ENCODE measurements at regions of chr14 and their contacts with region 1.

Region 1: DNA sequence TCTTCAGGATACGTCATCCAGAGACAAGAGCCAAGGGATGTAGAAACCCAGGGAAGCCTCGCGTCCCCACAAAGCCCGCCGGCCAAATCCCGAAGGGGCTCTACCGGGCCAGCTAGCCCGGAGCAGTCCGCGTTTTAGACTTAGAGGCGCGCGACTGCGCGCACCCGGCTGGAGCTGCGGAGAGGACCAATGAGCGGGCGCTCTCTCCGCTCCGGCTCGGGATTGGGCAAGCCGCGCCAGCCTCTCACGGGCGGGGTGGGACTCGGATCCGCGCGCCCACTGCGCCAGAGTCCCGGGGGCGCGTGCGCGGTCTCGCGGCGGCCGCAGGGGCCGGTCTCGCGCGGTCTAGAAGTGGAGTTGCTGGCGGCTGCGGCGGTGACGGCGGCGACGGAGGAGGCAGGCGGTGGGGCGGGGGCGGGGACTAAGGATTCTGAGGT is 239 bp upstream of the PALS1 start:
- DNase-seq: peak; percentile 95 to 98
- ATAC-seq: peak; percentile 86 to 88
- H3K4me3 ChIP-seq: peak overlapping the region; percentile 85 to 95 (median 92)
- H3K27ac ChIP-seq: peak overlapping the region; percentile 94 to 99 (median 96)
- H3K4me1 ChIP-seq: peaks cover 8 to 22% of the 10 kb centered on the region in 2 donors
- H3K27me3 ChIP-seq: no peaks in the 10 kb centered on the region
- CTCF ChIP-seq: no peak
- POLR2A ChIP-seq: peak; percentile 86 to 88

Region 2: GRCh38 chr14:67359775-67360648 is 119.0 kb after region 1 on chr14 and contains the starts of genes ATP6V1D and EIF2S1:
- in situ Hi-C with region 1: no loop called
- intact Hi-C with region 1: loop called (anchors 1 kb)
- DNase-seq: peak; percentile 99
- ATAC-seq: peak; percentile 94 to 96
- H3K4me3 ChIP-seq: peak within 1 kb of the TSS; percentile 72 to 99 (median 94)
- H3K27ac ChIP-seq: peak within 1 kb of the TSS; percentile 95 to 98 (median 98)
- H3K4me1 ChIP-seq: peaks cover 48 to 51% of the 10 kb centered on the region in 2 donors
- H3K27me3 ChIP-seq: no peaks in the 10 kb centered on the region
- CTCF ChIP-seq: peak; percentile 79 to 100 (median 95)
- POLR2A ChIP-seq: peak; percentile 62 to 90
- total RNA-seq, gene ATP6V1D: 69.8 to 126 (median 73.3) TPM
- total RNA-seq, gene EIF2S1: 87.7 to 164 (median 129) TPM

Region 3: GRCh38 chr14:67586369-67586768 is 345.4 kb after region 1 on chr14:
- in situ Hi-C with region 1: no loop called
- intact Hi-C with region 1: no loop called
- DNase-seq: no peak
- ATAC-seq: no peak
- H3K4me3 ChIP-seq: no peak overlapping the region
- H3K27ac ChIP-seq: no peak overlapping the region
- H3K4me1 ChIP-seq: no peaks in the 10 kb centered on the region
- H3K27me3 ChIP-seq: no peaks in the 10 kb centered on the region
- CTCF ChIP-seq: no peak
- POLR2A ChIP-seq: no peak